Ascending aorta (tissue), 2 donors: ENCODE measurements at regions of chr14 and their contacts with region 1.

Region 1: DNA sequence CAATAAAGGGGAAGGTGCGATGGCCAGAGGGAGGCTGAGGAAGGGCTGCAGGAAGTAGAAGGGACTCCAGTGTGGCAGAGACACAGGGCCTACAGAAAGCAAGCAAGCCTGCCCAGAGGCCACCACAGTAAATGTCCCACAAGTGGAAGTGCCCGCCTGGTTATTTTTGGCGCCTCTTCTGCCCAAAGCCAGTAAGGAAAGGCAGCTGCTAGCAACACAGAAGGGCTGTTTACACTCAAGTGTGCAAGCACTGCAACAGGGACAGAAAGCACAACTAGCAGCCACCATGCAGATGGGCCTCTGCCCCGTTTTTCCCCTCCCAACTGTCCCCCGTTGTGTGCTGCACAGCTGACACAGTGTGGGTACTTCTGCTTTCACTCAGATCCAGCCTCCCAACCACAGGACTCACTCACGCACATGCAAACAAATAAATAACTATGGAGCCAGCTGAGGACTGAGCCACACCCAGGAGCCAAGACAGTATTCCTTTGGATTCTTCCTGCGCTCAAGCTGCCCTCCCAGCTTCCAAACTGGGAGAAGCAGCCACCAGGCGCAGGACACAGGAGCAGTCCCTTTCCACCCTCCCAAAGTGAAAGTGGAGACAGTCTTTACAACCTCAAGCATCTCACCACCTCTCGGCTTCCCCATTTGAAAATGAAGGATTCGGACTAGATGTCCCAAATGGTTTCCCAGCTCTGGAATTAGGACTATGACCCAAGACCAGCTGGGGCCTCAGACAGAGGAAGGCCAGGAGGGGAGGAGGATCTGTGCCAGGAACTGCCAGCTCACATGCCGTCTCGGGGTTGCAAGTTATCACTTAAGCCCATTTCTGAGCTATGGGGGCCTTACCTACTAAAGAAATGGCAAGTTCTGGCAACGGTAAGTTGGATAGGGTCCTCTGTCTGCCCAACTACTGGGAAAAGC is 40.0 kb upstream of the PNMA1 start:
- DNase-seq: no peak
- H3K4me3 ChIP-seq: peak overlapping the region; percentile 24 to 50
- H3K27ac ChIP-seq: peak overlapping the region; percentile 98 to 99
- H3K4me1 ChIP-seq: peaks cover 60 to 98% of the 10 kb centered on the region in 2 donors
- H3K27me3 ChIP-seq: no peaks in the 10 kb centered on the region
- CTCF ChIP-seq: no peak

Region 2: GRCh38 chr14:73311708-73312030 is 442.6 kb before region 1 on chr14:
- intact Hi-C with region 1: no loop called
- DNase-seq: no peak
- H3K4me3 ChIP-seq: no peak overlapping the region
- H3K27ac ChIP-seq: no peak overlapping the region
- H3K4me1 ChIP-seq: no peaks in the 10 kb centered on the region
- H3K27me3 ChIP-seq: no peaks in the 10 kb centered on the region
- CTCF ChIP-seq: no peak

Region 3: DNA sequence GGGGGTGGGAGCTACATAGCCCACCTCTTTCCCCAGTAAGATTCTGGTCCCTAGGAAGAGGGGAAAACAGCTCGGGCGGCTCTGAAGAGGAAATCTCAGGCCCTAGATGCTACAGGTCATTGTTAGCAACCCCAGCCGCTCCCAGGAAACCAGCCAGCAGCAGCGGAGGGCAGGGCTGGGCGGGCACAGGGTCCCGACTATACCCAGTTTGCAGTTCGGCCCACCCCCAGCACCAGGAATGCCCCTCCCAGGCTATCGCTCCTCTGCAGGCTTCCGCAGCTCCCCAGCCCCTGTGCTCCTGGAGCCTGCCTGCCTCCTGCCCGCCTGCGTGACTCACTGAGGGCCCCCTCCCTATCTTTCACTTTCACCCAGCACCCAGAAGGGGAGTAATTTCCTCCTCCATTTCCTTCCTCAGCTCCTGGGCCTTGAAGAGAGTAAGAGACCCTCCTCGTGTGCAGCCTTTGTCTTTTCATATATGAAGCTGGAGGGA is 12.8 kb before region 1 on chr14:
- intact Hi-C with region 1: loop called (anchors 2 kb)
- DNase-seq: peak in 1 of 2 donors; percentile 88
- H3K4me3 ChIP-seq: peak overlapping the region; percentile 34 to 50
- H3K27ac ChIP-seq: peak overlapping the region; percentile 91 to 98
- H3K4me1 ChIP-seq: peaks cover 52 to 78% of the 10 kb centered on the region in 2 donors
- H3K27me3 ChIP-seq: no peaks in the 10 kb centered on the region
- CTCF ChIP-seq: no peak